ENCODE measurements at regions of chr12 and their contacts with region 1.

Region 1: GRCh38 chr12:1093166-1093751 is 102.2 kb downstream of the ERC1 start:
- DNase-seq: no peak
- ATAC-seq: peak; percentile 89
- H3K4me3 ChIP-seq: no peak overlapping the region
- H3K27ac ChIP-seq: no peak overlapping the region
- H3K4me1 ChIP-seq: peaks cover 6% of the 10 kb centered on the region; the same call in 1 of the 2 replicates
- H3K27me3 ChIP-seq: no peaks in the 10 kb centered on the region
- CTCF ChIP-seq: peak; percentile 78

Region 2: DNA sequence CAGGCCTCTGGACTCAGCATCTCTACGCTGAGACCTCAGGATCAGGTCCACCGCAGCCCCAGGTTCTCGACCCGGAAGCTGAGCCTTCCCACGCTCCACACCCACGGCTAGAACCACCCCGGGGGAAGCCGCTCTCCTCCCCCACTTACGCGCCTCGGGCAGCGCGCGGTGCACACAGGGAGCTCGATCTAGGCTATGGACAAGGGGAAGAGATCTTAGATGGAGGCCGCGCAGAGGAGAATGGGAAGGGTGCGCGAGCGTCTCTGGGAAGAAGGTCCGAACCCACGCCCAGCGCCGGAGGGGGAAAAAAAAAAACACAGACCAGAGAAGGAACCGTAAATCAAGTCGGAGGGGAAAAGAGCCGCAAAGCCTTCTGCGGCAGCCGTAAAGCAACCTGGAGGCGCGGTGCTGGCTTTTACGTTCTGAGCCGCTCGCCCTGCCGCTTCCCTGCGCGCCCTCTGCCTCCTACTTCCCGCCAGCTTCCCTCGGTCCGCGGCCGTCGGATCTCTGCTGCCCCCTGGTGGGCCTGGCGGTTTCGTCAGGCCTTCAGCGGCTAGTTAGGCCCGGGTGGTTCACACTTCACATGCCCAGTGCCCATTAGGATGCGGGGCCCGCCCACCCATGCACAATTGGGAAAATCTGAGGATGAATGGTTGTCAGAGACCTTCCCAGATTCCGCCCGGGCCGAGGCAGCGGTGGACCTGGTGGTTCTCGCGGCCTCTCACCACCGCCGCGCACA is 143.6 kb before region 1 on chr12 and contains the start of gene RAD52:
- CTCF ChIA-PET with region 1: interaction called, 14 read pairs
- POLR2A ChIA-PET with region 1: interaction called, 4 read pairs
- in situ Hi-C with region 1: no loop called
- intact Hi-C with region 1: no loop called
- DNase-seq: peak; percentile 88
- ATAC-seq: peak; percentile 94
- H3K4me3 ChIP-seq: peak within 1 kb of the TSS; percentile 71 to 84
- H3K27ac ChIP-seq: peak within 1 kb of the TSS; percentile 91
- H3K4me1 ChIP-seq: peaks cover 12% of the 10 kb centered on the region; the same call in 1 of the 2 replicates
- H3K27me3 ChIP-seq: no peaks in the 10 kb centered on the region
- CTCF ChIP-seq: peak; percentile 95
- total RNA-seq, gene RAD52: 15.8 TPM

Region 3: GRCh38 chr12:1108276-1108675 is 15.0 kb after region 1 on chr12:
- CTCF ChIA-PET with region 1: no interaction called
- POLR2A ChIA-PET with region 1: no interaction called
- in situ Hi-C with region 1: no loop called
- intact Hi-C with region 1: no loop called
- DNase-seq: no peak
- ATAC-seq: no peak
- H3K4me3 ChIP-seq: no peak overlapping the region
- H3K27ac ChIP-seq: no peak overlapping the region
- H3K4me1 ChIP-seq: no peaks in the 10 kb centered on the region
- H3K27me3 ChIP-seq: no peaks in the 10 kb centered on the region
- CTCF ChIP-seq: no peak

Region 4: GRCh38 chr12:1197264-1198018 is 104.2 kb after region 1 on chr12:
- CTCF ChIA-PET with region 1: no interaction called
- POLR2A ChIA-PET with region 1: no interaction called
- in situ Hi-C with region 1: no loop called
- intact Hi-C with region 1: no loop called
- DNase-seq: no peak
- ATAC-seq: no peak
- H3K4me3 ChIP-seq: no peak overlapping the region
- H3K27ac ChIP-seq: no peak overlapping the region
- H3K4me1 ChIP-seq: no peaks in the 10 kb centered on the region
- H3K27me3 ChIP-seq: no peaks in the 10 kb centered on the region
- CTCF ChIP-seq: no peak

Measured in Panc1 (cell line).